ENCODE measurements at regions of chr6 and their contacts with region 1.

Region 1: DNA sequence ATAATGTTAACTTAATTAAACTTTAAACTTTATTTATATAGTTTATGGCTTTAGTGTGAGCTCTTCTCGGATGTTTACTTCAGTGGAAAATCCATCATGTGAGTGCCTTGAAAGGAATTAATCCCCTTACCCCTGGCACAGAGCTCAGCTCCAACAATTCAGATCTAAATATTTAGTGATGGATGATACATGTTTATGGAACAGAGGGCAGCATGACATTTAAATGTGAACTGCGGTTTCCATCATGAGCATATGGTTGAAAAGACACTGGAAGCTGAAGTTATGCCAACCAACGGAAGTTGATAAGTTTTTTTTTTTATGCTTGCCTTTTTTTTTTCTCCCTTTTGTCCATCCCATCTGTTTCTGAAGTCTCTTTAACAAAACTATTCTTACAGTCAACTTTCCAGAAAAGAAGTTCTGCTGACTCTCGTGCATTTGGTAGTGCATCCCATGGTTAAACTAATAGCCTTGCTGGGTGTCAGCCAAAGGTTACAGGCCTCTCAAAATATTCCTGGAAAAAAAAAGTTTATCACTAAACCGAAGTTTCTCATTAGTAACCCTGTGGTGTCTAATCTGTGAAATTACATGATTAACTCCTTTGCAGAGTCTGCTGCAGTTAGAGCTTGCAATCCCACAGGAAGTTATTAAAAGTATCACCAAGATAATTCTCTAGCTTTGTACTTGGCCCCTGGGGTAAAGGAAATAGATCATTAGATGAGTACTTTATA is 243.9 kb upstream of the TCF21 start:
- DNase-seq: peak; percentile 78
- H3K4me3 ChIP-seq: no peak overlapping the region
- H3K27ac ChIP-seq: no peak overlapping the region
- H3K27me3 ChIP-seq: no peaks in the 10 kb centered on the region
- CTCF ChIP-seq: no peak

Region 2: GRCh38 chr6:133587546-133588160 is 57.4 kb before region 1 on chr6:
- CTCF ChIA-PET with region 1: interaction called, 3 read pairs
- POLR2A ChIA-PET with region 1: interaction called, 19 read pairs
- DNase-seq: peak; percentile 70
- H3K4me3 ChIP-seq: no peak overlapping the region
- H3K27ac ChIP-seq: no peak overlapping the region
- H3K27me3 ChIP-seq: no peaks in the 10 kb centered on the region
- CTCF ChIP-seq: no peak

Region 3: DNA sequence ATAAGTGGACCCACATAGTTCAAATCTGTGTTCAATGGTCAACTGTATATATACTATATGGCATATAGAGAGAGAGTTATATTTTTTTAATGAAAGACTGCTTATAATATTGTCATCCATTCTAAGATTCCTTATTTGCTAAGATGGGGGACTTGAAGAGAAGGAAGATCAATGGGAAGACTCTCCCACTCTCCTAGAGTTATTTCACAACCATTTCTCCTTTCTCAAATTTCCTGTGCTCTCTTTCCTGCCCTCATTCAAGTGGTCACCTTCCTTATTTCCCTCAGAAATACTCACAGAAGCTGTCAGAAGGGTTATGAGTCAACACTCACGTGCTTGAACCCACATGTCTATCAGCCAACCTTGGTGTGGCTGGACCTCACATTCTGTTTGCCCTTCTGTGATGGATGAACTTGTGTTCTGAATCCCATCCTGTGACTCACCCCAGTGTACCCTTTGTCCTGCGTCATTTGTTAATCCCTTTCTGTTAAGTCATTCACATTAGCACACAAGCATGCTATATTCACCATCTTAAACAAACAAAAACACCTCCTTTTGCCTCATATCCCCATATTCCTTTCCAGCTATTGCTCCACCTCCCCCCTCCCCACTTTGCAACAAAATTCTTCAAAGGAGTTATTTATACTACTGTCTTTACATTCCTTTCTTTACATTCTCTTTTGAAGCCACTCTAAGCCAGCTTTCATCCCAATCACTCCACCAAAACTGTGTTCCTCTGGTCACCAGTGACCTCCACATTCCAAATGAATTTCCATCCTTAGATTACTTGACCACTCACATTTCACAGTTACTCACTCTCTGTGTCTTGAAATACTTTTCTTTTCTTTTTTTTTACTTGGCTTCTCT is 35.4 kb before region 1 on chr6:
- CTCF ChIA-PET with region 1: no interaction called
- POLR2A ChIA-PET with region 1: interaction called, 28 read pairs
- DNase-seq: peak; percentile 100
- H3K4me3 ChIP-seq: no peak overlapping the region
- H3K27ac ChIP-seq: peak overlapping the region; percentile 92
- H3K27me3 ChIP-seq: no peaks in the 10 kb centered on the region
- CTCF ChIP-seq: no peak

Region 4: GRCh38 chr6:133682506-133683307 is 37.7 kb after region 1 on chr6:
- CTCF ChIA-PET with region 1: no interaction called
- POLR2A ChIA-PET with region 1: no interaction called
- DNase-seq: no peak
- H3K4me3 ChIP-seq: no peak overlapping the region
- H3K27ac ChIP-seq: no peak overlapping the region
- H3K27me3 ChIP-seq: no peaks in the 10 kb centered on the region
- CTCF ChIP-seq: no peak

Region 5: GRCh38 chr6:133707456-133707855 is 62.4 kb after region 1 on chr6:
- CTCF ChIA-PET with region 1: no interaction called
- POLR2A ChIA-PET with region 1: interaction called, 12 read pairs
- DNase-seq: peak; percentile 79
- H3K4me3 ChIP-seq: no peak overlapping the region
- H3K27ac ChIP-seq: peak overlapping the region; percentile 68
- H3K27me3 ChIP-seq: no peaks in the 10 kb centered on the region
- CTCF ChIP-seq: no peak

Region 6: GRCh38 chr6:133916650-133917151 is 271.6 kb after region 1 on chr6:
- CTCF ChIA-PET with region 1: interaction called, 29 read pairs
- POLR2A ChIA-PET with region 1: interaction called, 3 read pairs
- DNase-seq: peak; percentile 89
- H3K4me3 ChIP-seq: no peak overlapping the region
- H3K27ac ChIP-seq: no peak overlapping the region
- H3K27me3 ChIP-seq: no peaks in the 10 kb centered on the region
- CTCF ChIP-seq: peak; percentile 97